ENCODE measurements at regions of chr6 and their contacts with region 1.

Region 1: DNA sequence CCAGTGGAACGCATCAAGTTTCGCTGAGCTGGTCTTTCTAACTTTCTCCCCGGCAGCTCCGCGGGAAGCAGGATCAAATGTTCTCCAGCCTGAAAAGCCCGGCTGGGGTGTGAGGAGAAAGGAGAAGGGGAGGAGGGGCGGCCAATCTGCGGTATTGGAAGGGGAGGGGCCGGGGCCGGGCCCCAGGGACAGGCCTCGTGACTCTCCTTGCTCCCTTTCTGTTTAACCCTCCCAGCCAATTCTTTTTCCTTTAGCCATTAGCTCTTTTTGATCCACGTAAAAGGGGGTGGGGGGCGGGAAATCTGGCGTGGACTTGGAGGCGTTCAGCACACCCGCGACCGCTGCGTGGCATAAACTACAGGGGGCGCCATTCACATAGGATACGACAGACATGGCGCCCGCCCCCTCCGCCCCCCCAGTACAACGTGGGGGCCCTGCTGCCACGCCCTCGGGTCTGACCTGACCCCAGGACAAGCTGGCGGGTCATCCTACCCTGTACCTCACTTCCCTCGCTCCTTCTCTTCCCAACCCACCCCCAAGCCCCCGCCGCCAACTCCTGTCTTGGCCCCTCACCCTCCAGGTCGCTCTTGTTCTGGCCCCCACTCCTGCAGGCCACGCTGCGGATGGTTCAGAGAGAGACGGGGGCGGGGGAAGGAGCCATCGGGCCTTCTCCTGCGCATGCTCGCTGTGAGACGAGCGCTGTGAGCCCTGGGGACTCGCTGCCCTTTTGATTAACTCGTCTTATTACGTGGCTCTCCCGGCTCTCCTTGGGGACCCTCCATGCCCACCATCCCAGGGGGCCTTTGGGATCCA is 7.8 kb upstream of the MDGA1 start:
- DNase-seq: peak; percentile 71
- H3K4me3 Mint-ChIP-seq: peak overlapping the region; percentile 65
- H3K27ac Mint-ChIP-seq: peak overlapping the region; percentile 57
- H3K4me1 Mint-ChIP-seq: peaks cover 9% of the 10 kb centered on the region
- H3K27me3 Mint-ChIP-seq: no peaks in the 10 kb centered on the region

Region 2: DNA sequence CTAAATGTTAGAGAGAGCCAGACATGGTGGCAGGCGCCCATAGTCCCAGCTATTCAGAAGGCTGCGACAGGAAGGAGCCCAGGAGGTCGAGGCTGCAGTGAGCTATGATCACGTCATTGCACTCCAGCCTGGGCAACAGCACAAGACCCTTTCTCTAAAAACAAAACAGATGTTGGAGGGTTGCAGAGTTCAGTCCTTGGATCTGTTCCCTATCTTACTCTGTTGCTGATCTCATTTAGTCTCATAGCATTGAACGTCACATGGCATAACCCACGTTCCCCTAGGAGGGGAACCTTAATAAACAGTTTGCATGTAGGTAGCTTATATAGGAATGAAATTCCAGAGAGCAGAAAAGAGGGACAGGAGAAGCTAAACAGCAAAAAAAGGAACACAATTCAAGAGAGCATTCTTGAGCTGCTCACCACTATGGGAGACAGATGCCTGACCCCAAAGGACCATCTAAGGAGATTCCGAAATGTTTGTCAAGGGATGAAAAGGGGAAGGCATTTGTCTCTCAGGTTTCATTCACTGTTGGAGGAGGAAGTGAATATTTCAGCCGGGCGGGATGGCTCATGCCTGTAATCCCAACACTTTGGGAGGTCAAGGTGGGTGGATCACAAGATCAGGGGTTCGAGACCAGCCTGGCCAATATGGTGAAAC is 590.1 kb before region 1 on chr6:
- CTCF ChIA-PET with region 1: no interaction called
- intact Hi-C with region 1: no loop called
- DNase-seq: no peak
- H3K4me3 Mint-ChIP-seq: no peak overlapping the region
- H3K27ac Mint-ChIP-seq: no peak overlapping the region
- H3K4me1 Mint-ChIP-seq: peaks cover 15% of the 10 kb centered on the region
- H3K27me3 Mint-ChIP-seq: peaks cover 3% of the 10 kb centered on the region

Region 3: GRCh38 chr6:37783856-37784584 is 78.6 kb after region 1 on chr6:
- CTCF ChIA-PET with region 1: no interaction called
- intact Hi-C with region 1: loop called (anchors 2 kb)
- DNase-seq: peak; percentile 27
- H3K4me3 Mint-ChIP-seq: peak overlapping the region; percentile 72
- H3K27ac Mint-ChIP-seq: no peak overlapping the region
- H3K4me1 Mint-ChIP-seq: peaks cover 15% of the 10 kb centered on the region
- H3K27me3 Mint-ChIP-seq: peaks cover 32% of the 10 kb centered on the region

Region 4: DNA sequence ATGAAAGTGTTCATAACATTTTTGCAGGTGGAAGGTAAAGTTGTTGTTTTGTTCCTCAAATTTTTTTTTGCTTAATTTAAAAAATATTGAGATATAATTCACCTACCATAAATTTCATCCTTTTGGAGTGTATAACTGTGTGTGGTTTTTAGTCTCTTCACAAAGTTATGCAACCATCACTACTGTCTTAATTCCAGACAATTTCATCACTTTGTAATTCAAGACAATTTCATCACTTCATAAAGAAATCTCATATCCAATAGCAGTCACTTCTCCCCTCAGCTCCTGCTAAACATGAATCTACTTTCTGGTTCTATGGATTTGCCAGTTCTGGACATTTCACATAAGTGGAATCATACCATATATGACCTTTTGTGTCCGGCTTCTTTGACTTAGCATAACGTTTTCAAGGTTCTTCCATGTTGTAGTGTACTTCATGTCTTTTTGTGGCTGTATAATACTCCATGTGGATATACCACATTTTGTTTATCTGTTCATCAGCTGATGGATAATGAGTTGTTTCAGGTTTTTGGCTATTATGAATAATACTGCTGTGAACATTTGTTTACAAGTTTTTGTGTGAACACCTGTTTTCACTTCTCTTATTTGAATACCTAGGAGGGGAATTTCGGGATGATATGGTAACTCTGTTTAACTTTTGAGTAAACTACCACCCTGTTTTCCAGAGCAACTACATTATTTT is 132.9 kb after region 1 on chr6:
- CTCF ChIA-PET with region 1: no interaction called
- intact Hi-C with region 1: no loop called
- DNase-seq: no peak
- H3K4me3 Mint-ChIP-seq: no peak overlapping the region
- H3K27ac Mint-ChIP-seq: no peak overlapping the region
- H3K4me1 Mint-ChIP-seq: peaks cover 42% of the 10 kb centered on the region
- H3K27me3 Mint-ChIP-seq: no peaks in the 10 kb centered on the region

Region 5: DNA sequence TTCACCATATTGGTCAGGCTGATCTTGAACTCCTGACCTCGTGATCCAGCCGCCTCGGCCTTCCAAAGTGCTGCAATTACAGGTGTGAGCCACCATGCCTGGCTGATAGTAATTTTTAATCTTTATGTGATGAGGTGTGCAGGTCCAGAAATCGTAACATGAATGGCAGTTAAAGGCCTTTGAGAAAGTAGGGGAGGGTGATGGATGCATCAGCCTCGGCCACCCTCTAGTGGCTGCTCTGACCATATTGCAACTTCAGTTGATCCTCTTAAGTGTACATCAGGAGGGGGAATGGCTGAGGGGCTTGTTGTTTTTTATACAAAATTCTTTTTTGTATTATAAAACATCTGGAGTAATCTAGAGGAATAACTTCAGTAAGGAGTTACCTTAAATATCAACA is 307.1 kb after region 1 on chr6:
- CTCF ChIA-PET with region 1: no interaction called
- intact Hi-C with region 1: loop called (anchors 2 kb)
- DNase-seq: peak; percentile 24
- H3K4me3 Mint-ChIP-seq: no peak overlapping the region
- H3K27ac Mint-ChIP-seq: no peak overlapping the region
- H3K4me1 Mint-ChIP-seq: peaks cover 14% of the 10 kb centered on the region
- H3K27me3 Mint-ChIP-seq: no peaks in the 10 kb centered on the region

Region 6: GRCh38 chr6:38493931-38494547 is 788.6 kb after region 1 on chr6:
- CTCF ChIA-PET with region 1: interaction called, 5 read pairs
- intact Hi-C with region 1: loop called (anchors 1 kb)
- DNase-seq: peak; percentile 95
- H3K4me3 Mint-ChIP-seq: no peak overlapping the region
- H3K27ac Mint-ChIP-seq: no peak overlapping the region
- H3K4me1 Mint-ChIP-seq: peaks cover 10% of the 10 kb centered on the region
- H3K27me3 Mint-ChIP-seq: no peaks in the 10 kb centered on the region